ENCODE measurements at regions of chr3 and their contacts with region 1.

Region 1: DNA sequence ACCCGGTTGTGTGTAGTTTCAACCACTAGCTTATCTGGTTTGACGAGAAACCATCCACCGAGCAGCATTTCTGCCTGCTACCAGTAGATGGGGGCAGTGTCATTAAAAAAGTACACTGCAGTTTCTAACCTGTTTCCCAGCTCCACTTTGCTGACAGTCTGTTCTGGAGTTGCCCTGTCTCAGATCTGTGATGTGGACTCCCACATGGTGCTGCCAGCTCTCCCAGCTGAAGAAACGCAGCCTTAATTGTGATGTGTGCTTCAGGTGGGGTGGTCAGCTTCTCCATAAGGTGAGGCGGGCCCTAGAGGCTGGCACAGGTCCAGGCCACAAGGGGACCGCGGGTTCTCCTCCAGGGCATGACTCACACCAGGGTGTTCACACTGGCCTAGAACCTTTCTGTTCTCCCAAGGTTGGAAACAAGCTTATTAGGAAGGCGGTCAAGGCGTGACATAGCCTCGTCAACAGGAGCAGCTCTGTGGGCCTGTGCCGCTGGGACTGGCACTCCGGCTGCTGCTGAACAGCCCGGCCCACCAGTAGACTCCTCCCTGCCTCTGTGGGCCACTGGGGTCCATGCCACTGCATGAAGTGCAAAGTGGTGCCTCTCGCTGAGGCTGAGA is 2.9 kb upstream of the FAM43A start:
- DNase-seq: peak; percentile 77
- H3K4me3 Mint-ChIP-seq: no peak overlapping the region
- H3K27ac Mint-ChIP-seq: no peak overlapping the region
- H3K4me1 Mint-ChIP-seq: peaks cover 40% of the 10 kb centered on the region
- H3K27me3 Mint-ChIP-seq: peaks cover 44% of the 10 kb centered on the region

Region 2: DNA sequence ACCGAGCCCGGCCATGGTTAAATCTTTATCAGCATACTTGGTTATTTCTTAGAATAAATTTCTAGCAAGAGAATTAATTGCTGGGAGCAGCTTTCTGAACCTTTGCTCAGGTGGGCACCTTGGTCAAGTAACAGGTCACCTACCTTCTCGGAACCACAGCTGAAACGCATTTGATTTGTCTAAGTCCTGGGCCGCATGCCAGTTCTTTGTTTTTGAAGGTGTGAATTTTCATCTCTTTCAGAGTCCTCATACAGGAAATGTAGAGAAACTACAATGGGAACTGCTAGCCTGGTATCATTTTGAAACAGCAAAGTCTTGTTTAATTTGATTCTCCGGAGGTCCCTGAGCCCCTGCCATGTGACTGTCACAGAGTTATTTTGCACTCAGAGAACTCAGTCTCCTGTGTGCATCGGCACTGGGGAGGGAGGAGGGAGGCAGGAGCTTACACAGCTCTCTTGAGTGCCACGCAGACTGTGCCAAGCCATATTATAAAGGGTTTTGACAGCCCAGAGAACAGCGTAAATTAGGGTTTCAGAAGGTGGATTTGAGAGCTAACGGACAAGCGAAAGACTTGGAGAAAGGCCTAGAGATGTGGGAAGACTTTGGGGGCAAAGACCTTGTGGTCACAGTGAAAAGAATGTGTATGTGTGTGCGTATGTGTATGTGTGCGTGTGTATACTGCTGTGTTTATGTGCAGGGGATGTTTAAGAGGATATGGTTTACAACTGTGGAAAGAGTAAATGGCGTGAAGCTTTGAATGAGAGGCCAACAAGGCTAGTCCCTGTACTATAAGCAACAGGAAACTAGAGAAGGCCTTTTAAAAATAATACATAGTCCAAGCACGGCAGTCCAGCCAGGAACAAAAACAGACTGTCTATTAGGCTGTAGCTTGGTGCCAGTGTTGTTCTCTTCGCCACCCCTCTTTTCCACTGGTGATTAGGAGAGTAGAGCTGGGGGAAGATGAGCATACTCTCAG is 134.2 kb before region 1 on chr3:
- CTCF ChIA-PET with region 1: no interaction called
- POLR2A ChIA-PET with region 1: no interaction called
- DNase-seq: no peak
- H3K4me3 Mint-ChIP-seq: no peak overlapping the region
- H3K27ac Mint-ChIP-seq: no peak overlapping the region
- H3K4me1 Mint-ChIP-seq: no peaks in the 10 kb centered on the region
- H3K27me3 Mint-ChIP-seq: peaks cover 2% of the 10 kb centered on the region

Region 3: GRCh38 chr3:195106418-195106906 is 423.7 kb after region 1 on chr3:
- CTCF ChIA-PET with region 1: interaction called, 12 read pairs
- POLR2A ChIA-PET with region 1: no interaction called
- DNase-seq: peak; percentile 62
- H3K4me3 Mint-ChIP-seq: peak overlapping the region; percentile 29
- H3K27ac Mint-ChIP-seq: no peak overlapping the region
- H3K4me1 Mint-ChIP-seq: peaks cover 10% of the 10 kb centered on the region
- H3K27me3 Mint-ChIP-seq: no peaks in the 10 kb centered on the region